K562 (cell line): ENCODE measurements at regions of chr1 and their contacts with region 1.

Region 1: GRCh38 chr1:160251687-160252526 is 10.4 kb downstream of the DCAF8 start:
- DNase-seq: peak; percentile 57 to 72 (median 65)
- ATAC-seq: peak; percentile 96
- H3K4me3 ChIP-seq: no peak overlapping the region
- H3K27ac ChIP-seq: no peak overlapping the region
- H3K4me1 ChIP-seq: no peaks in the 10 kb centered on the region; a peak in 1 of 5 replicates
- H3K27me3 ChIP-seq: no peaks in the 10 kb centered on the region
- CTCF ChIP-seq: peak; percentile 67 to 81 (median 74)
- EP300 ChIP-seq: no peak
- POLR2A ChIP-seq: no peak
- RAD21 ChIP-seq: peak; percentile 78 to 80

Region 2: GRCh38 chr1:158864595-158864994 is 1387.3 kb before region 1 on chr1:
- CTCF ChIA-PET with region 1: no interaction called
- POLR2A ChIA-PET with region 1: no interaction called
- in situ Hi-C with region 1: no loop called
- intact Hi-C with region 1: no loop called
- DNase-seq: no peak
- ATAC-seq: no peak
- H3K4me3 ChIP-seq: no peak overlapping the region
- H3K27ac ChIP-seq: no peak overlapping the region
- H3K4me1 ChIP-seq: no peaks in the 10 kb centered on the region
- H3K27me3 ChIP-seq: no peaks in the 10 kb centered on the region
- CTCF ChIP-seq: no peak
- EP300 ChIP-seq: no peak
- POLR2A ChIP-seq: no peak
- RAD21 ChIP-seq: no peak

Region 3: DNA sequence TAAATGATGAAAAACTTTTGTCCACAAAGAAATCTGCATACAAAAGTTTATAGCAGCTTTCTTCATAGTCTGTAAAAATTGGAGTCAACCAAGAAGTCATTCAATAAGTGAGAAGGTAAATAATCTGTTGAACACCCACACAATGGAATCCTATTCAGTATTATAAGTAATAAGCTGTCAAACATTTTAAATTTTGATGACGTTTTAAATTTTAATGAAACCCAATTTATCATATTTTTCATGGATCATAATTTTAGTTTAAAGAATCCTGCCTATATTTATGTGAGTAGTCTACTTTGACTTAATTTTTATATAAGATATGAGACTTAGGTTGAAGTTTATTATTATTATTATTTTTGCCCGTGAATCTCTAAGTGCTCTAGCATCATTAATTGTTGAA is 792.4 kb before region 1 on chr1:
- CTCF ChIA-PET with region 1: no interaction called
- POLR2A ChIA-PET with region 1: no interaction called
- in situ Hi-C with region 1: no loop called
- intact Hi-C with region 1: no loop called
- DNase-seq: no peak
- ATAC-seq: no peak
- H3K4me3 ChIP-seq: no peak overlapping the region
- H3K27ac ChIP-seq: no peak overlapping the region
- H3K4me1 ChIP-seq: no peaks in the 10 kb centered on the region
- H3K27me3 ChIP-seq: no peaks in the 10 kb centered on the region
- CTCF ChIP-seq: no peak
- EP300 ChIP-seq: no peak
- POLR2A ChIP-seq: no peak
- RAD21 ChIP-seq: no peak

Region 4: GRCh38 chr1:160238408-160238807 is 13.5 kb before region 1 on chr1:
- CTCF ChIA-PET with region 1: no interaction called
- POLR2A ChIA-PET with region 1: interaction called, 20 read pairs
- in situ Hi-C with region 1: no loop called
- intact Hi-C with region 1: no loop called
- DNase-seq: no peak
- ATAC-seq: no peak
- H3K4me3 ChIP-seq: no peak overlapping the region
- H3K27ac ChIP-seq: no peak overlapping the region
- H3K4me1 ChIP-seq: peaks cover 0 to 3% of the 10 kb centered on the region in 2 experiments; a peak in 1 of 5 replicates
- H3K27me3 ChIP-seq: no peaks in the 10 kb centered on the region
- CTCF ChIP-seq: no peak
- EP300 ChIP-seq: no peak
- POLR2A ChIP-seq: no peak
- RAD21 ChIP-seq: no peak